Activated CD4-positive, alpha-beta T cell treated with anti-CD3 and anti-CD28 coated beads, Interleukin-2, amount 10 ng/mL, durations not matched to agents 24 days and 14 days (primary cell): ENCODE measurements at regions of chr11 and their contacts with region 1.

Region 1: DNA sequence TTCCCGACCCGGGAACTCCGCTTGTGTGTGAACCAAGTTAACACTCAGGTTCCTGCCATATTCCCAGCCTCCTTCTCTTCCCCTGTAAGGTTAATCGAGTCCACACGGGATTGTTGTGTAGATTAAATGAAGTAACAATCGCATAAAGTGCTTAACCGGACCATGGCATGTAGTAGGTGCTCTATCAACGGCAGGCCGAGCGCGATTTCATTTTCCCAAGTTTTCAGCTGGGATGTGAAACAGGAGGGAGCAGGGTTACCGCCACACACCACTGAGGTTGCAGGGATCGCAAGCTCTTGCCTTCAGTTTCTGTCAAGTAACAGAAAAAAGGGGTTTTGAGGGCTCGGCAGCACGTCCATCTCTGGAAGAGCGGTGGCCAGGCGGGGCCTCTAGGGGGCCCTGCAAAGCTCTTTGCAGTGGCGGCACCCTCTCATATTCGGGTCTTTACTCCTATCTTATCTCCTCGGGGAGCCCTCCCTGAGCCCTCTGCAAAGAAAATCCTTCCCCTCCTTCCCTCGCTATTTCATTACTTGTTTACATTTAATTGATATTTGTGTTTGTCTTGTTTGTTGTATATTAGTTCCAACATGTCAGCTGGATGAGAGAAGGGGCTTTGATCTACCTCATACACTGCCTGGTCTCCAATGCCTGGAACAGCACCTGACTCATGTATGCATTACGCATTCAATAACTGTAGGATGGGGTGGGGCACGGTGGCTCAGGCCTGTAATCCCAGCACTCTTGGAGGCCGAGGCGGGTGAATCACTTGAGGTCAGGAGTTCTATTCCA is 818 bp upstream of the PLEKHA7 start:
- DNase-seq: peak; percentile 67
- H3K4me3 Mint-ChIP-seq: peak overlapping the region; percentile 84
- H3K27ac Mint-ChIP-seq: peak overlapping the region; percentile 48
- H3K4me1 Mint-ChIP-seq: peaks cover 3% of the 10 kb centered on the region
- H3K27me3 Mint-ChIP-seq: peaks cover 39% of the 10 kb centered on the region

Region 2: DNA sequence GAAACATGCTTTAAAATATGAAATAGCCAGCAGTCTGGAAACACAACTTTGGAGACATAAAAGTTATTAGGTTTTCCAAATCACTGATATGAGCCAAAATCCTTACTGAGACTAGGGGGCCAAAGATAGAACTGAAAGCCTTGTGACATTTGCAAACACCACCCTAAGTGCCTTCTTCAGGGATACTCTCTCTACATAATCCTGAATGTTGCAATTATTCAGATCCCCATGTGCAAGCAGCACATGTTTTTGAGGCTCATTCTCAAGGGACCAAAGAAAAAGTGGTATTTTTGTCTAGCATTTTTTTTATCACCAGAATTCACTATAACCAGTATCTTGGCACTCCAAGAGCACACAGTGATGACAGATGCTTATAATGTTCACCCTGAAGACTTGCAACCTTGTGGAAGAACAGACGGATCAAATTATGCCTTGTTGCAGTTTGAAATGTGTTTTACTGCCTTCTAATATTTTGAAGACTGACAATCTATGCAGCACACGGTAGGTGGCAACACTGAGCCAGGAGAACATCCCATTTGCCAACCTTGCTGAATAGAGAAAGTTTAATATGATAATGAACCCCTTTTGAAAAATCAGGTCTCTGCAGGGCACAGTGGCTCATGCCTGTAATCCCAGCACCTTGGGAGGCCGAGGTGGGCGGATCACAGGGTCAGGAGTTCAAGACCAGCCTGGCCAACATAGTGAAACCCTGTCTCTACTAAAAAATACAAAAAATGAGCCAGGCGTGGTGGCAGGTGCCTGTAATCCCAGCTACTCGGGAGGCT is 79.3 kb before region 1 on chr11:
- intact Hi-C with region 1: loop called (anchors 5 kb)
- DNase-seq: peak; percentile 74
- H3K4me3 Mint-ChIP-seq: no peak overlapping the region
- H3K27ac Mint-ChIP-seq: no peak overlapping the region
- H3K4me1 Mint-ChIP-seq: no peaks in the 10 kb centered on the region
- H3K27me3 Mint-ChIP-seq: peaks cover 6% of the 10 kb centered on the region

Region 3: GRCh38 chr11:17572359-17572690 is 557.3 kb after region 1 on chr11:
- intact Hi-C with region 1: no loop called
- DNase-seq: no peak
- H3K4me3 Mint-ChIP-seq: no peak overlapping the region
- H3K27ac Mint-ChIP-seq: no peak overlapping the region
- H3K4me1 Mint-ChIP-seq: peaks cover 6% of the 10 kb centered on the region
- H3K27me3 Mint-ChIP-seq: peaks cover 3% of the 10 kb centered on the region